MCF 10A (cell line): ENCODE measurements at regions of chr14 and their contacts with region 1.

Region 1: DNA sequence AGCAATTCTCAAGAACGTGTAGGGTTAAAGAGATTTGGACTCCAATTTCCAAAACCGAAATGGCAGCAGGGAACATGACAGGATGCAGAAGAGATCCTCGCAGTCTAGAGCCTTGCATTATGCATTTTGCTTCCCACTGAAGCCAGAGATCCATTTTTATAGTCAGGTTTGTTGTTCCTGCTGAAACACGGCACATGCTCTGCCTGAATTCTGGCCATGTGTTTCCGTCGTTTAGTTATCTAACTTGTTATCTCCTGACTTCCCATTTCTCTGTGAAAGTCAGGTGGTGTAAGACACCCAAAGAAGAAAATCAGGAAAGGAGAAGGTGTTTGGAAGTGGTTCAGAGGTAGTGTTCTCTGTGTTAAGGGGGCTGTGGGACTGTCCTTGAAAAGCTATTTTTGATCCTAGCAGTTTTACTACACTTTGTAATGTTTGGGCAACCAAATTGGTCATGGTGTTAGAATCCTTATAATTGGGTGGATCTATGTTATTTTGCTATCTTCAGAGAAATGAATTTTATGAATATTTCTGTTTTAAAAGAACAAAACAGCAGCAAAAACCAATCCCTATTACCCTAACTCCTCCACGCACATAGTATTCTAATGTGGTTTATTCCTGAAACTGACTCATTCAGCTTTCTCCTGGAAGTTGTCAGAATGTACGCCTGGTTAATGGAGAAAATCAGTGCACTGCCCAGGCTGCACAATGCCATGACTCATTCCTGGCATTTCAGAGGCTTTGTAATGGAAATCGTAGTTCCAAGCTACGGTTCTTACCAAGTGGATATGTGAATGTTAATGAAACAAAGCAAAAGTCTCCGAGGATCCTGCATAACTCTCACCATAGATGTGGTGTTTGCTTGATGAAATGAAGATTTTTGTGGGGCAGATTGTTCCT is 110.1 kb downstream of the SAMD4A start:
- DNase-seq: peak; percentile 92
- H3K4me3 Mint-ChIP-seq: peak overlapping the region; percentile 14
- H3K27ac Mint-ChIP-seq: peak overlapping the region; percentile 86
- H3K4me1 Mint-ChIP-seq: peaks cover 31% of the 10 kb centered on the region
- H3K27me3 Mint-ChIP-seq: no peaks in the 10 kb centered on the region
- CTCF ChIP-seq: no peak

Region 2: DNA sequence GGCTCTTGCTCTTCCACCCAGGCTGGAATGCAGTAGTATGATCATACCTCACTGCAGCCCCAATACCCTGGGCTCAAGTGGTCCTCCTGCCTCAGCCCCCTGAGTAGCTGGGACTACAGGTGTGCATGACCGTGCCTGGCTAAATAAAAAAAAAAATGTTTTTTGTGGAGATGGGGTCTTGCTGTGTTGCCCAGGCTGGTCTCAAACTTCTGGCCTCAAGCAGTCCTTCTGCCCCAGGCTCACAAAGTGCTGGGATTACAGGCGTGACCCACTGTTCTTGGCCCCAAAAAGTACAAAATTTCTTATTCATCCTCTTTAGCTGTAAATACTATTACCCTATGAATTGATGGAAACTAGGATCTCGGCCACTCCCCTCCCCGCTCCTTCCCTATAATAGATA is 152.7 kb before region 1 on chr14:
- CTCF ChIA-PET with region 1: no interaction called
- POLR2A ChIA-PET with region 1: no interaction called
- intact Hi-C with region 1: no loop called
- DNase-seq: no peak
- H3K4me3 Mint-ChIP-seq: no peak overlapping the region
- H3K27ac Mint-ChIP-seq: no peak overlapping the region
- H3K4me1 Mint-ChIP-seq: no peaks in the 10 kb centered on the region
- H3K27me3 Mint-ChIP-seq: no peaks in the 10 kb centered on the region
- CTCF ChIP-seq: no peak

Region 3: GRCh38 chr14:54593860-54594259 is 83.2 kb before region 1 on chr14:
- CTCF ChIA-PET with region 1: no interaction called
- POLR2A ChIA-PET with region 1: interaction called, 4 read pairs
- intact Hi-C with region 1: loop called (anchors 5 kb)
- DNase-seq: peak; percentile 42
- H3K4me3 Mint-ChIP-seq: no peak overlapping the region
- H3K27ac Mint-ChIP-seq: peak overlapping the region; percentile 33
- H3K4me1 Mint-ChIP-seq: peaks cover 54% of the 10 kb centered on the region
- H3K27me3 Mint-ChIP-seq: no peaks in the 10 kb centered on the region
- CTCF ChIP-seq: no peak

Region 4: GRCh38 chr14:54652188-54652587 is 24.9 kb before region 1 on chr14:
- CTCF ChIA-PET with region 1: no interaction called
- POLR2A ChIA-PET with region 1: interaction called, 22 read pairs
- intact Hi-C with region 1: no loop called
- DNase-seq: peak; percentile 90
- H3K4me3 Mint-ChIP-seq: peak overlapping the region; percentile 63
- H3K27ac Mint-ChIP-seq: peak overlapping the region; percentile 80
- H3K4me1 Mint-ChIP-seq: peaks cover 40% of the 10 kb centered on the region
- H3K27me3 Mint-ChIP-seq: no peaks in the 10 kb centered on the region
- CTCF ChIP-seq: no peak

Region 5: GRCh38 chr14:54698966-54699530 is 22.0 kb after region 1 on chr14:
- CTCF ChIA-PET with region 1: no interaction called
- POLR2A ChIA-PET with region 1: no interaction called
- intact Hi-C with region 1: no loop called
- DNase-seq: no peak
- H3K4me3 Mint-ChIP-seq: no peak overlapping the region
- H3K27ac Mint-ChIP-seq: no peak overlapping the region
- H3K4me1 Mint-ChIP-seq: peaks cover 9% of the 10 kb centered on the region
- H3K27me3 Mint-ChIP-seq: no peaks in the 10 kb centered on the region
- CTCF ChIP-seq: no peak

Region 6: DNA sequence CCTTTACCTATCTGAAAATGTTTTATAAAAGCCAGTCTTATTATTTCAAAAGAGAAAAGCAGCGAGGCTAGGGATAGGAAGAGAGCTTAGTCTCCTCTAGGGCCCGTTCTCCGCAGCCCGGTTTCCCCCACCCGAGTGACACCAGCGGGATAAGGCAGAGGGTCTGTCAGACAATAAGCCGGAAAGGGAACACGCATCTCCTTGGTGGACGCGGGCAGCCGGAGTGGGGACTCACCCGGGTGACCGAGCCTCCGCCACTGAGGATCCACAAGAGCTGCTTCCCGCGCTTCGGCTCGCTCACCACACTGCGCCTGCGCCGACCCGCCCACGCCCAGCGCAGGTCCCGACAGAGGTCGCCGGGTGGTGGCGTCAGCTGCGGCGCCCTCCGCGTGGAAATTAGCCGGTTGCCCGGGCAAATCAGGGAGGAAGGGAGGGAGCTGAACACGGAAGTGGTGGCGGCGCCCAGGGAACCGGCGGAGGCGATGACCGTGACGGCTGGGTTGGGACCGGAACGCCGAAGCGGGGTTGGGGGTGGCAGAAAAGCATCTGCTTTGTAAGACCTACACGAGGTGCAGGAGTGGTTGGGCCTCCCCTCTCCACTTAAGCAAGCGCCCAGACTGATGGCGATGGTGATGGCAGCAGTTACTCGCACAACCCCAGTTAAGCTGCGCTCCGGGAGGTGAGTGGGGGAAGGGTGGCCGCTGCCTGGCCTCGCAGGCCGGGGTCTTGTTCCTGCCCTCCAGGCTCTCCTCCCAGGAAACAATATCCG is 349.9 kb after region 1 on chr14 and contains the starts of genes SOCS4 and WDHD1:
- CTCF ChIA-PET with region 1: no interaction called
- POLR2A ChIA-PET with region 1: no interaction called
- intact Hi-C with region 1: no loop called
- DNase-seq: peak; percentile 93
- H3K4me3 Mint-ChIP-seq: peak within 1 kb of the TSS; percentile 91
- H3K27ac Mint-ChIP-seq: peak within 1 kb of the TSS; percentile 88
- H3K4me1 Mint-ChIP-seq: peaks cover 20% of the 10 kb centered on the region
- H3K27me3 Mint-ChIP-seq: no peaks in the 10 kb centered on the region
- CTCF ChIP-seq: no peak
- total RNA-seq, gene SOCS4: 24.6 and 29.6 TPM in 2 replicates
- total RNA-seq, gene WDHD1: 5.8 and 6.5 TPM in 2 replicates